Vagina (tissue), 2 donors: ENCODE measurements at regions of chr5 and their contacts with region 1.

Region 1: DNA sequence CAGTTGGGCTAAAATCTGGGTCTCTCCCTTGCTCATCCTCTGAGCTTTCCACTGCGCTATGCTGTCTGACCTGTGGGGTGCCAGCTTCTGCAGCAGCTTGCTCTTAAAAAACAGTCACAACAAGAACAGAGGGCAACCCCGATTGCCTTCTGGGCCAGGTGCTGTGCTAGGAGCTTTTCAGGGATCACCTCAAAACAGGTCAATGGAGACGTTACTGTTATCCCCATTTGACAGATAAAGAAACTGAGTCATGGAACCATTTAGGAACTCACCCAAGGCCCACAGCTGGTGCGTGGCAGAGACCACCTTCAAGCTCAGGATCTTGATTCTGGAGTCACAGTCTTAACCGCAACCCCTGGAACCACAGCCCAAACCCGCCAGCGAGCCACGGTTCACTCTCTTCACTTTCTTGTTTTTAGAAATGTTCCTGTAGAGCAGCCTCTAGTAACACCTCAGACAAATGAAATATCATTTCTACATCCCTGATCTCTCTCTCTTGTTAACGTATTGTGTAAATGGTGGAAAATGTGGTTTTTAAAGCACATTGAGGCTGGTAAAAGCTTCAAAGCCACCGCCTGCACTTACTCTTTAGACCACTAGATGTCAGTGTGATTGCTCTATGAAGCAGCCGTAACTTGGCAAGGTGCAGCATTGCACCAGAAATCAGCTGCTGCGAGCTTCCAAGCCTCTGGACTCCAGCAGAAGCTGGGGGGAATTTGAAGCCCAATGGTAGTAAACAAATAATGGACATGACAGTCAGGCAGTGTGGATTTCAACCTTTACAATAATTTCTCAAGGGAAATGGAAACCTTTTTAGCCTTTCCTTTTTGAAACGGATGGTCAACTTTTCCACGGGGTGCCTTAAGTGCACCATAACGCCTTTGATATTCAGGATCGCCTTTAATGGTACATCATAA is 1.7 kb downstream of the FYB1 start:
- DNase-seq: no peak
- H3K4me3 ChIP-seq: no peak overlapping the region
- H3K27ac ChIP-seq: peak overlapping the region; percentile 57
- H3K4me1 ChIP-seq: peaks cover 14% of the 10 kb centered on the region
- H3K27me3 ChIP-seq: no peaks in the 10 kb centered on the region
- CTCF ChIP-seq: peak; percentile 92 to 96 (median 92)
- POLR2A ChIP-seq: no peak

Region 2: GRCh38 chr5:39283231-39283818 is 65.7 kb after region 1 on chr5:
- intact Hi-C with region 1: loop called (anchors 2 kb)
- DNase-seq: no peak
- H3K4me3 ChIP-seq: no peak overlapping the region
- H3K27ac ChIP-seq: no peak overlapping the region
- H3K4me1 ChIP-seq: no peaks in the 10 kb centered on the region
- H3K27me3 ChIP-seq: no peaks in the 10 kb centered on the region
- CTCF ChIP-seq: peak in 2 of 3 experiments; percentile 35 to 57
- POLR2A ChIP-seq: no peak

Region 3: DNA sequence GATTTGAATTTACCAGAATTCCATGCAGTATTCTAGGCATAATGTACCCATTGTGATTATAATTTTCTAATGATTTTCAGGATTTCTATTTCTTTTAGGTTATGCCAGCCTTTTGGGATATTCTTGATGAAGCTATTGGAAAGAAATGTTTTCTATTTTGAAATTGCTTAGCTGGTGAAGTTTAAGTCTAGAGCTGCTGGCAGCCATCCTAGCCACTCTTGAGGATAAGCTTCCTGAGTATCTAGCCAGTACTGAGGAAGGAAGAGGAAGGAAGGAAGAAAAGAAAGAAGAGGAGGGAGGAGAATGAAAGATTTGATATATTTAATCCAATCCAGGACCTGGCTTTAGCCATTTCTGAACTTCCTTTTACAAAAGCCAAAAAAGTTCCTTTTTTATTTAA is 349.3 kb after region 1 on chr5:
- intact Hi-C with region 1: loop called (anchors 10 kb)
- DNase-seq: no peak
- H3K4me3 ChIP-seq: no peak overlapping the region
- H3K27ac ChIP-seq: no peak overlapping the region
- H3K4me1 ChIP-seq: no peaks in the 10 kb centered on the region
- H3K27me3 ChIP-seq: no peaks in the 10 kb centered on the region
- CTCF ChIP-seq: no peak
- POLR2A ChIP-seq: no peak